ENCODE measurements at regions of chr10 and their contacts with region 1.

Region 1: GRCh38 chr10:7121154-7121810 is 289.6 kb downstream of the SFMBT2 start:
- DNase-seq: peak; percentile 86
- H3K4me3 Mint-ChIP-seq: no peak overlapping the region
- H3K27ac Mint-ChIP-seq: no peak overlapping the region
- H3K4me1 Mint-ChIP-seq: peaks cover 5% of the 10 kb centered on the region
- H3K27me3 Mint-ChIP-seq: no peaks in the 10 kb centered on the region

Region 2: GRCh38 chr10:7070950-7071349 is 50.3 kb before region 1 on chr10:
- CTCF ChIA-PET with region 1: no interaction called
- intact Hi-C with region 1: no loop called
- DNase-seq: no peak
- H3K4me3 Mint-ChIP-seq: no peak overlapping the region
- H3K27ac Mint-ChIP-seq: no peak overlapping the region
- H3K4me1 Mint-ChIP-seq: no peaks in the 10 kb centered on the region
- H3K27me3 Mint-ChIP-seq: no peaks in the 10 kb centered on the region

Region 3: DNA sequence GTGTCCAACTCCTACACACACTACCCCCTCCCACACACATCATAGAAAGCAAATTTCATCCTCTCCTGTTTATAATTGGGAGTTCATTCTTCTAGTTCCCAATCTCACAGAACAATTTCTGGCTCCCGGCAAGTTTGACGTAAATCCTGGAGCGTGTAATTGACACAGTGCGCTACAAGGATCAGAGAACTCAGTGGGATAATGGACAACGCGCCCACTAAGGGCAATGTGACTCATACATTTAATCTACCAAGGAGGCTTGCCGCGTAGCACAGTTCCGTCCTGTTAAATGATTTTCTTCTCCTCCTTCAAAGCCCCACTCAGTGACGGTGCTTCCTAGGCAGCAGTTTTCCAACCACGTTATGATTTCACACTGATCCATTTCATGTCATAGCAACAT is 12.0 kb after region 1 on chr10:
- CTCF ChIA-PET with region 1: interaction called, 15 read pairs
- intact Hi-C with region 1: no loop called
- DNase-seq: no peak
- H3K4me3 Mint-ChIP-seq: no peak overlapping the region
- H3K27ac Mint-ChIP-seq: no peak overlapping the region
- H3K4me1 Mint-ChIP-seq: peaks cover 7% of the 10 kb centered on the region
- H3K27me3 Mint-ChIP-seq: no peaks in the 10 kb centered on the region

Region 4: DNA sequence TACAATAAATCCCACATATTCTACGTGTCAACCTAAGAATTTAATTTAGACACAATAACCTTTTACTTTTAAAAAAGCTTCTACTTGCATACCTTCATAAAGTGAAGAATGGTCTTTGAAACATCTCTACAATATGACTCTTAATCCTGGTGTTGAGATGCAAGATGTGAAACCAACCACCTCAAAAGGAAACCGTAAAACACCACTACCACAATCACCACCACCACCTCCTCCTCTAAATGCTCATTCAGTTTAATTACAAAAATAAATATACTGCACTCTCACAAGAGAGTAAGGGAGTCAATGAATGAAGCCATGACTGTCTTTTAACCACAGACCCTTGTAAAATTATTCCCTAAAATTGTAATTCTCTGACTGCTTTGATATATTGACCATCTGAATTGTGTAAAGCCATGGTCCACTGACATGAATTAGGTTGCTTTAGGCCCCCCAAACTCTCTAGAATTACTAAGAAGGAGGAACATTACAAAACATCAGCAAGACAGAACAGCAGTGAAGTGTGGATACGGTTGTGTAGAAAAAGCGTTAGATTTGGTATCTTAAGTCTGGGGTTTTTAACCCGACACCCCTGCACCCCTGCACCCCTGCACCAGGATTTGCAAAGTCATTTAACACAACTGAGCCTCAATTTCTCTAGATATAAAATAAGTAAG is 118.2 kb after region 1 on chr10:
- CTCF ChIA-PET with region 1: no interaction called
- intact Hi-C with region 1: loop called (anchors 5 kb)
- DNase-seq: peak; percentile 63
- H3K4me3 Mint-ChIP-seq: no peak overlapping the region
- H3K27ac Mint-ChIP-seq: no peak overlapping the region
- H3K4me1 Mint-ChIP-seq: peaks cover 35% of the 10 kb centered on the region
- H3K27me3 Mint-ChIP-seq: no peaks in the 10 kb centered on the region

Region 5: DNA sequence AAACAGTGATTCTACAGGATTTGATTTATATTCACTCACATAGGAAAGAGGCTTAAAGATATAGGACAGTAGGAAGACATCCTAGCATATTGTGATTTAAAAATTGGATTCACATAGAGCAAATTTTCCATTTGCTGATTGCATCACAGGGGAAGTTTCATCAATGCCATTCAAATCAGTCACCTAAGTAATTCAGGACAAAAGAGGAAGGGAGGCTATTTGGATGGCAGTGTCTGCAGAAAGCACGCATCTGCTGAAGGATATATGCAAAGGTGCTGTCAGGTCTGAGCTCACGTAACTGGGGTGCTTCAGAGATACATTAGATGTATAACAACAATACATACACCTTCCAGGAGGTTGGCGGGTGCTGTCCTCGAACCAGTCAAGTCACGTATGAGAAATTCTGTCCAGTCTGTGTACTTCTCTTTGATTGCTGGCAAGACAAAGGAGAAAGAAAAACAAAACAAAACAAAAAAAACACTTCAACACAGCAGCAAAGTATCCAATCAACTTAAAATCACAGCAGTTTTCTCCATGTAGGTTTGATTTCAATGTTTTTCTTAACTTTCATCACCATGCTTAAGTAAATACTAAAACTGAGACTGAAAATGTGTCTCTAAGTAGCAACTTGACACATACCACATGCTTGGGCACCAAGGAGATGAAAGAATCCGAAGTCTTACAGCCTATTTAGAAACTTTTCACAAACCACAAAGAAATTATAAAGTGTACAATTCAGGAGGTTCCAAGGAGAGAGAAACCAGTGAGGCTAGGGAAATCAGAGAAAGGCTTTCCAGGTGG is 164.4 kb after region 1 on chr10:
- CTCF ChIA-PET with region 1: no interaction called
- intact Hi-C with region 1: no loop called
- DNase-seq: no peak
- H3K4me3 Mint-ChIP-seq: no peak overlapping the region
- H3K27ac Mint-ChIP-seq: no peak overlapping the region
- H3K4me1 Mint-ChIP-seq: peaks cover 32% of the 10 kb centered on the region
- H3K27me3 Mint-ChIP-seq: no peaks in the 10 kb centered on the region

Region 6: DNA sequence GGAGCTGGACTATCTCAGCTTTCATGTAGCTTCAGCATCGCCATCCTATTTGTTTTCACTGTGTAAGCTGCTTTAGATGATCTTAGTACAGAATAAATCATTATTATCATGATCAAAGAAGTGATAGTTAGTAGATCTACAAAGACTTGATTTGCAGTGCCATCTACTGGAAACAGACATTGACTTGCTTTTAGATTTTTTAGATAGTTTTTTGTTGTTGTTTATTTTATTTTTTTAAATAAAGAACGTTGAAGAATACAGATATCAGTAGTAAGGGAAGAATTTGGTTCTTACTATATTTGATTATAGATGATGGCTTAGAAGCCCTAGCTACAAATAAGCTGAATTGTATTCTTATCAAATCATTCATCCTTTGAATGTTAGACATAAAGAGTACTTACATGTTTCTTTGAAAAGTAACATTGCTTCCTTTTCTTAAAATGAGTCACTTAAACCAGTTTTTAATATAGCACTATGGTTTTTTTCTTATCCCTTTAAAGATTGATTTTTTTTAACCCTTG is 295.9 kb after region 1 on chr10:
- CTCF ChIA-PET with region 1: interaction called, 21 read pairs
- intact Hi-C with region 1: loop called (anchors 1 kb)
- DNase-seq: no peak
- H3K4me3 Mint-ChIP-seq: no peak overlapping the region
- H3K27ac Mint-ChIP-seq: no peak overlapping the region
- H3K4me1 Mint-ChIP-seq: peaks cover 17% of the 10 kb centered on the region
- H3K27me3 Mint-ChIP-seq: peaks cover 11% of the 10 kb centered on the region

Region 7: GRCh38 chr10:7687228-7687907 is 566.1 kb after region 1 on chr10:
- CTCF ChIA-PET with region 1: no interaction called
- intact Hi-C with region 1: loop called (anchors 5 kb)
- DNase-seq: peak; percentile 92
- H3K4me3 Mint-ChIP-seq: no peak overlapping the region
- H3K27ac Mint-ChIP-seq: no peak overlapping the region
- H3K4me1 Mint-ChIP-seq: peaks cover 10% of the 10 kb centered on the region
- H3K27me3 Mint-ChIP-seq: no peaks in the 10 kb centered on the region